ENCODE measurements at regions of chr19 and their contacts with region 1.

Region 1: GRCh38 chr19:53195265-53195903 is 2.2 kb upstream of the ZNF665 start:
- DNase-seq: peak; percentile 39 to 86 (median 77)
- ATAC-seq: peak; percentile 53
- H3K4me3 ChIP-seq: no peak overlapping the region
- H3K4me3 Mint-ChIP-seq: peak overlapping the region; percentile 4 to 93 (median 64)
- H3K27ac ChIP-seq: no peak overlapping the region
- H3K27ac Mint-ChIP-seq: peak overlapping the region; percentile 30 to 96 (median 64)
- H3K4me1 ChIP-seq: peaks cover 9% of the 10 kb centered on the region in 2 donors
- H3K4me1 Mint-ChIP-seq: peaks cover 17 to 57% (median 46%) of the 10 kb centered on the region in 7 donors
- H3K27me3 ChIP-seq: no peaks in the 10 kb centered on the region
- H3K27me3 Mint-ChIP-seq: no peaks in the 10 kb centered on the region

Region 2: DNA sequence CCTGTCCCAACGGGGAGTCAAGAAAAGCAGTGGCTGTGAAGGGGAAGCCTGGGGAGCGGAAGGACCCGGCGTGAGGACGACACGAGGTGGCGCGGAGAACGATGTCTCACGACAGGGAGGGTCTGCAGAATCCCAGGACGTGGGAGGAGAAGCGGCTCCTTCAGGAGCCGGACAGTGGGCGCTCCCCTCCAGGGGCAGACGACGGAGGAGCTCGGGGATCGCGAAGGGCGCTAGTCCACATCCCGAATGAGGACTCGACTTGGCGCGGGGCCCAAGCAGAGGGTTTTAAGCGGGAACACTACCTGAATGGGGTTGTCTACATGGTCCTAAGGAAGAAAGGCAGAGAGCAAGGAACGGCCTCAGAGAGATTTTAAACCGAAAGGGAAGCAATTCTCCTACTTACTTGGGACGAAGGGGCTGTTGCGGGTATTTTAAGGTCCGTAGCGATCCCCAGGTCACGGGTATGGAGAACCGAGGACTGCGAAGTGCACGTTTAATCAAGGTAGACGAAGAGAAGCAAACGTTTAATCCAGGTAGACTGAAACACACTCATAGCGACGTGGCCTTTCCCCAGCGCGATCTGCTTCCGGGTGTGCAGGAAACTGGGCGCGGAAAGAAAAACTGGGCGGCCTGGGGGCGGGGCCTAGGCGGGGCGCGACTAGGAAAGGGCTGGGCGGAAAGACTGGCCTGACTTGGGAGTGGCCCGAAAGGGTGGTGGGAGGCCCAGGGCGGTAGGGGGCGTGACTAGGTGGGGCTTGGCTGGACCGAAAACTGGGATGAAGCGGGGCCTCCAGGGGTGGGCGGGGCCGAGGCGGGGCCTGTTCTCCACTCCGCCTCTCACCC is 1100.0 kb before region 1 on chr19 and contains the start of gene ZNF841:
- CTCF ChIA-PET with region 1: no interaction called
- POLR2A ChIA-PET with region 1: no interaction called
- intact Hi-C with region 1: no loop called
- DNase-seq: peak; percentile 64 to 84 (median 75)
- ATAC-seq: peak; percentile 98
- H3K4me3 ChIP-seq: peak within 1 kb of the TSS; percentile 86
- H3K4me3 Mint-ChIP-seq: peak within 1 kb of the TSS; percentile 87 to 99 (median 96)
- H3K27ac ChIP-seq: peak within 1 kb of the TSS; percentile 81
- H3K27ac Mint-ChIP-seq: peak within 1 kb of the TSS; percentile 62 to 99 (median 94)
- H3K4me1 ChIP-seq: peaks cover 0 to 9% of the 10 kb centered on the region in 2 donors
- H3K4me1 Mint-ChIP-seq: peaks cover 24 to 47% (median 39%) of the 10 kb centered on the region in 7 donors
- H3K27me3 ChIP-seq: no peaks in the 10 kb centered on the region
- H3K27me3 Mint-ChIP-seq: no peaks in the 10 kb centered on the region
- total RNA-seq, gene ZNF841: 22.6 to 43.5 (median 27.5) TPM

Region 3: GRCh38 chr19:52734893-52735661 is 460.3 kb before region 1 on chr19 and contains the start of gene ZNF611:
- CTCF ChIA-PET with region 1: no interaction called
- POLR2A ChIA-PET with region 1: no interaction called
- intact Hi-C with region 1: loop called in 1 of 2 experiments (anchors 10 kb)
- DNase-seq: peak; percentile 97 to 100 (median 98)
- ATAC-seq: peak; percentile 98
- H3K4me3 ChIP-seq: peak within 1 kb of the TSS; percentile 99
- H3K4me3 Mint-ChIP-seq: peak within 1 kb of the TSS; percentile 85 to 96 (median 93)
- H3K27ac ChIP-seq: peak within 1 kb of the TSS; percentile 95
- H3K27ac Mint-ChIP-seq: peak within 1 kb of the TSS; percentile 92 to 98 (median 95)
- H3K4me1 ChIP-seq: peaks cover 0 to 8% of the 10 kb centered on the region in 2 donors
- H3K4me1 Mint-ChIP-seq: peaks cover 14 to 32% (median 24%) of the 10 kb centered on the region in 7 donors
- H3K27me3 ChIP-seq: no peaks in the 10 kb centered on the region
- H3K27me3 Mint-ChIP-seq: no peaks in the 10 kb centered on the region
- total RNA-seq, gene ZNF611: 23.4 to 56.0 (median 36.8) TPM

Region 4: DNA sequence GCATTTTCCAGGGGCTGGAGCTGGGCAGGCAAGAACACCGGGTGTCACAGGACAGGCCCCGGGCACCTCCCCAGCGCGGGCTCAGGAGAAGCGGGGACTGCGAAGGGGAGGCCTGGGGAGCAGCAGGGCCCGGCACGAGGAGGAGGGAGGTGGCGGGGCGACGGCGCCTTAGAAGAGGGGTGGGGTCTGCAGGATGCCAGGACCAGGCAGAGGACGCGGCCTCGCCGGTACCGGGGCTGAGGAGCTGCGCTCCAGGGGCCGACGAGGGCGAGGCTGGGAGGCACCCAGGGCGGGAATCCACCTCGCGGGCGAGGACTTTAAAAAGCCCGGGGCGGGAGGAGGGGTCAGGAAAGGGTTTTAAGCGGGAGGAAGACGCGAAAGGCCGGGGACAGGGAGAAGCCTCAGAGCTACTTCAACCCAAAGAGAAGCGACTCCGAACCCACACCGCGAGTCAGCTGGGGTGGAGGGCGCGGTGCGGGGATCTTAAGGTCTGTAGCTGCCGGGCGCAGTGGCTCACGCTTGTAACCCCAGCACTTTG is 37.2 kb before region 1 on chr19:
- CTCF ChIA-PET with region 1: no interaction called
- POLR2A ChIA-PET with region 1: interaction called, 9 read pairs
- intact Hi-C with region 1: loop called (anchors 1 kb)
- DNase-seq: peak in 5 of 9 donors; percentile 9 to 41 (median 26)
- ATAC-seq: peak; percentile 35
- H3K4me3 ChIP-seq: peak overlapping the region; percentile 97
- H3K4me3 Mint-ChIP-seq: peak overlapping the region; percentile 65 to 91 (median 86)
- H3K27ac ChIP-seq: peak overlapping the region; percentile 70
- H3K27ac Mint-ChIP-seq: peak overlapping the region; percentile 44 to 90 (median 85)
- H3K4me1 ChIP-seq: peaks cover 4 to 7% of the 10 kb centered on the region in 2 donors
- H3K4me1 Mint-ChIP-seq: peaks cover 12 to 32% (median 27%) of the 10 kb centered on the region in 7 donors
- H3K27me3 ChIP-seq: no peaks in the 10 kb centered on the region
- H3K27me3 Mint-ChIP-seq: no peaks in the 10 kb centered on the region

Region 5: DNA sequence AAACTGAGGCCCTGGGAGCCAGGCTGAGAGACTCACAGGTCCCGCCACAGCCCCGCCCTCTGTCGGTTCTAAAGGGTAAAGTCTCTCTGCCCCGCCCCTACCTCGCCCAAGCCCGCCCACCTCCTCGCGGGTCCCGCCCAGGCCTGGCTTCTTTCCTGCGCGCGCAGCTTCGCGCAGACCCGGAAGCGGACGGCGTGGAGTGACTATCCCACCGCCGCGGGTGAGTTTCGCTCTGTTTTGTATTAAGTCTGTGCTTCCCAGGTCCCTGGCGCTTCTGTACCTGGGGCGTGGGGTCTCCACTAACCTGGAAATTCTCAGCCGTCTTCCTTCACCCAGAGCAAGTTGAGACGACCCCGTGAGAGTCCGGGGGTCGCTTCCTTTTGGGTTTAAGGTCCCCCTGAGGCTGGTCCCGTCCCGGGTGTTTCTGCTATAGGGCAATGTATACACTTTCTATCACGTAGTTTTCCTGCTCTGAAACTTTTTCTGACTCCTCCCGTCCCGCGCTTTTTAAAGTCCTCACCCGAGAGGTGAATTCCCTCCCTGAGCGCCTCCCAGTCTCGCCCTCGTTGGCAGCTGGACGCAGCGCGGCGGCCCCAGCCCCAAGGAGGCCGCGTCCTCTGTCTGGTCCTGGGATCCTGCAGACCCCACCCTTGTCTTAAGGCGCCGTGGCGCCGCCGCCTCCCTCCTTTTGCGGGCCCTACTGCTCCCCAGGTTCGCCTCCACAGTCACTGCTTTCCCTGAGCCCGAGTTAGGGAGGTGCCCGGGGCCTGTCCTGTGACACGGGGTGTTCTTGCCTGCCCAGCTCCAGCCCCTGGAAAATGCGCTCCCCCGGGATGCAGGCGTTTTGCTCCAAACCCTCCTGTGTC is 199.8 kb after region 1 on chr19 and contains the start of gene ZNF765:
- CTCF ChIA-PET with region 1: no interaction called
- POLR2A ChIA-PET with region 1: no interaction called
- intact Hi-C with region 1: loop called (anchors 1 kb)
- DNase-seq: peak; percentile 92 to 99 (median 97)
- ATAC-seq: peak; percentile 100
- H3K4me3 ChIP-seq: peak within 1 kb of the TSS; percentile 97
- H3K4me3 Mint-ChIP-seq: peak within 1 kb of the TSS; percentile 88 to 97 (median 93)
- H3K27ac ChIP-seq: peak within 1 kb of the TSS; percentile 82
- H3K27ac Mint-ChIP-seq: peak within 1 kb of the TSS; percentile 89 to 97 (median 94)
- H3K4me1 ChIP-seq: peaks cover 5 to 8% of the 10 kb centered on the region in 2 donors
- H3K4me1 Mint-ChIP-seq: peaks cover 13 to 40% (median 31%) of the 10 kb centered on the region in 7 donors
- H3K27me3 ChIP-seq: no peaks in the 10 kb centered on the region
- H3K27me3 Mint-ChIP-seq: no peaks in the 10 kb centered on the region
- total RNA-seq, gene ZNF765: 5.1 to 19.5 (median 11.4) TPM

Region 6: GRCh38 chr19:53553884-53554791 is 358.8 kb after region 1 on chr19:
- CTCF ChIA-PET with region 1: no interaction called
- POLR2A ChIA-PET with region 1: no interaction called
- intact Hi-C with region 1: loop called in 1 of 2 experiments (anchors 5 kb)
- DNase-seq: peak; percentile 90 to 97 (median 95)
- ATAC-seq: peak; percentile 88
- H3K4me3 ChIP-seq: peak overlapping the region; percentile 67
- H3K4me3 Mint-ChIP-seq: peak overlapping the region; percentile 91 to 99 (median 96)
- H3K27ac ChIP-seq: peak overlapping the region; percentile 97
- H3K27ac Mint-ChIP-seq: peak overlapping the region; percentile 96 to 100 (median 100)
- H3K4me1 ChIP-seq: peaks cover 4 to 6% of the 10 kb centered on the region in 2 donors
- H3K4me1 Mint-ChIP-seq: peaks cover 10 to 46% (median 29%) of the 10 kb centered on the region in 7 donors
- H3K27me3 ChIP-seq: no peaks in the 10 kb centered on the region
- H3K27me3 Mint-ChIP-seq: no peaks in the 10 kb centered on the region

Region 7: GRCh38 chr19:54029930-54030490 is 834.6 kb after region 1 on chr19:
- CTCF ChIA-PET with region 1: interaction called, 5 read pairs
- POLR2A ChIA-PET with region 1: no interaction called
- intact Hi-C with region 1: loop called in 1 of 2 experiments (anchors 5 kb)
- DNase-seq: peak; percentile 9 to 55 (median 31)
- ATAC-seq: peak; percentile 51
- H3K4me3 ChIP-seq: no peak overlapping the region
- H3K4me3 Mint-ChIP-seq: no peak overlapping the region
- H3K27ac ChIP-seq: no peak overlapping the region
- H3K27ac Mint-ChIP-seq: no peak overlapping the region
- H3K4me1 ChIP-seq: no peaks in the 10 kb centered on the region
- H3K4me1 Mint-ChIP-seq: peaks cover 0 to 8% (median 0%) of the 10 kb centered on the region in 7 donors
- H3K27me3 ChIP-seq: no peaks in the 10 kb centered on the region
- H3K27me3 Mint-ChIP-seq: peaks cover 6 to 38% (median 30%) of the 10 kb centered on the region in 5 donors